Naive thymus-derived CD4-positive, alpha-beta T cell (primary cell): ENCODE measurements at regions of chr3 and their contacts with region 1.

Region 1: GRCh38 chr3:16884084-16884747 is 539 bp upstream of the PLCL2 start:
- DNase-seq: peak; percentile 44 to 77 (median 66)
- ATAC-seq: peak; percentile 69
- H3K4me3 ChIP-seq: peak overlapping the region; percentile 46
- H3K4me3 Mint-ChIP-seq: peak overlapping the region; percentile 90 to 99 (median 96)
- H3K27ac ChIP-seq: peak overlapping the region; percentile 78
- H3K27ac Mint-ChIP-seq: peak overlapping the region; percentile 92 to 99 (median 97)
- H3K4me1 ChIP-seq: peaks cover 12 to 14% of the 10 kb centered on the region in 2 donors
- H3K4me1 Mint-ChIP-seq: peaks cover 27 to 40% (median 35%) of the 10 kb centered on the region in 7 donors
- H3K27me3 ChIP-seq: no peaks in the 10 kb centered on the region
- H3K27me3 Mint-ChIP-seq: peaks cover 0 to 7% (median 0%) of the 10 kb centered on the region in 5 donors

Region 2: DNA sequence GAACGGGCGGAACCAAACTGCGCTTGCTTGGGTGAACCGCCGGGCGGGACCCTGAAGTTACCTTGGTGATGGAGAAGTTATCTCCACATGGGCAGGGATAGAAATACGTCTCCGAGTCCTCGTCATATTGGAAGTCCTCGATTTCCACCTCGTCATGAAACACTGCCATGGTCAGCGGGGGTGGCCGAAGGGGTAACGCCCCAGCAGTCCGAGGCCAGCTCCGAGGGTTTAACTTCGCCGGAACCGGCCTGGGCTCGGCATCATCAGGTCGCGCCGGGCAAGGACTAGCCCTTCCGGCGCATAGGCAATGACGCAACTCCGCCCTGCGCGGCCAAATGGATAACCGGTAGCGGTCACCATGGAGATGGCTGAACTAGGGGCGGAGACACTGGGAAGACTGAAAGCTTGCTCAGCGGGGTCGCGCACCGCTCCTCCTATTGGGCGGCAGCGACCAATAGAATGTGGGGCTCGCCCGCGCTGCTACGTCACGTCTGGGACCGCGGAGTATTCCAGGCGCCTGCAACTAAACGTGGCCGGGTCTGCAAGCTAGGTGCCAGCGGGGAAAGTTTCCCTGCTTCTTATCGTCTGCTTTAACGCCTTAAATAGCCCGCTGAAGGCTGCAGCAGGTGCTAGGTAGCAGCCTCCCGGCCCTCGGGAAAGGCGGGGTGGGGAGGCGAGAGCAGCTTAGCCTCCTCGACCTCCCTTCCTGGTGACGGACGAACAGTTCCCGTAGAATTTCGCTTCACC is 619.3 kb before region 1 on chr3 and contains the starts of genes DPH3 and OXNAD1:
- CTCF ChIA-PET with region 1: no interaction called
- POLR2A ChIA-PET with region 1: no interaction called
- intact Hi-C with region 1: loop called (anchors 1 to 5 kb)
- DNase-seq: peak; percentile 97 to 99 (median 98)
- ATAC-seq: peak; percentile 96
- H3K4me3 ChIP-seq: peak within 1 kb of the TSS; percentile 85
- H3K4me3 Mint-ChIP-seq: peak within 1 kb of the TSS; percentile 85 to 100 (median 98)
- H3K27ac ChIP-seq: peak within 1 kb of the TSS; percentile 88
- H3K27ac Mint-ChIP-seq: peak within 1 kb of the TSS; percentile 96 to 100 (median 98)
- H3K4me1 ChIP-seq: peaks cover 13 to 28% of the 10 kb centered on the region in 2 donors
- H3K4me1 Mint-ChIP-seq: peaks cover 13 to 50% (median 43%) of the 10 kb centered on the region in 7 donors
- H3K27me3 ChIP-seq: no peaks in the 10 kb centered on the region
- H3K27me3 Mint-ChIP-seq: peaks cover 0 to 2% (median 0%) of the 10 kb centered on the region in 5 donors
- total RNA-seq, gene DPH3: 12.4 to 23.6 (median 15.7) TPM
- total RNA-seq, gene OXNAD1: 80.3 to 171 (median 152) TPM

Region 3: DNA sequence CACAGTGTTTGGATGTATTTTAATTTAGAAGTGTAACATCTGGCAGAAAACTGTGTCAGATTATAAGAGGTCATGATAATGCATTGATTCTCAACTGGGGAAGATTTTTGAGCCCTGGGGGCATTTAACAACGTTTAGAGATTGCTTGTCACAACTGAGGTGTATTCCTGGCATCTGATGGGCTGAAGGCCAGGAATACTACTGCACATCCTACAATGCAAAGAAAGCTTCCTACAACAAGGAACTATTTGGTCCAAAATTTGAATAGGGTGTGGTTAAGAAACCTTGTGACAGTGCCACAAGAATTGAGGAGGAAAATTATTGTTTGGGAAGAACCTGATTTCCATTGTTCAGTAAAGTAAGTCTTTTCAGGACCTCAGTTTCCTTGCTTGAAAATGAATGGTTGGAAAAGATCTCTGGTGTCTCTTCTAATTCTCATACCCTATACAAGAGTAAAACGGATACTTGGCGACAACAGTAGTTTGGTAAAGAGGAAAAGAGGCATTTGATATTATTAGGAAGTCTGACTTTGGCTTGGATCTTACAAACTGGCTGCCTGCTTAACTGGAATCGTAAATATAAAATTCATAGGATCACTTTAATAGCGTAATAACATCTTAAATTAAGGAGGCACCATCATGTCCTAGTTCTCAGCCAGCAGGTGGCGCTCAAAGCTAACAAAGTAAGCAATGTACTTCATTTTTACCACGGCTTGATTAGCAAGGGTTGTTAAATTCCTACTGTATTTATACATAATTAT is 283.3 kb before region 1 on chr3:
- CTCF ChIA-PET with region 1: interaction called, 3 read pairs
- POLR2A ChIA-PET with region 1: no interaction called
- intact Hi-C with region 1: loop called in 1 of 2 experiments (anchors 5 kb)
- DNase-seq: peak; percentile 54 to 79 (median 68)
- ATAC-seq: peak; percentile 68
- H3K4me3 ChIP-seq: no peak overlapping the region
- H3K4me3 Mint-ChIP-seq: no peak overlapping the region
- H3K27ac ChIP-seq: no peak overlapping the region
- H3K27ac Mint-ChIP-seq: no peak overlapping the region
- H3K4me1 ChIP-seq: peaks cover 0 to 3% of the 10 kb centered on the region in 2 donors
- H3K4me1 Mint-ChIP-seq: peaks cover 5 to 23% (median 16%) of the 10 kb centered on the region in 7 donors
- H3K27me3 ChIP-seq: no peaks in the 10 kb centered on the region
- H3K27me3 Mint-ChIP-seq: peaks cover 0 to 54% (median 4%) of the 10 kb centered on the region in 5 donors

Region 4: GRCh38 chr3:16849229-16849628 is 35.0 kb before region 1 on chr3:
- CTCF ChIA-PET with region 1: interaction called, 4 read pairs
- POLR2A ChIA-PET with region 1: interaction called, 87 read pairs
- intact Hi-C with region 1: loop called in 1 of 2 experiments (anchors 1 kb)
- DNase-seq: peak; percentile 20 to 74 (median 59)
- ATAC-seq: peak; percentile 89
- H3K4me3 ChIP-seq: peak overlapping the region; percentile 14
- H3K4me3 Mint-ChIP-seq: peak overlapping the region; percentile 43 to 85 (median 79)
- H3K27ac ChIP-seq: peak overlapping the region; percentile 54
- H3K27ac Mint-ChIP-seq: peak overlapping the region; percentile 69 to 92 (median 83)
- H3K4me1 ChIP-seq: peaks cover 24 to 43% of the 10 kb centered on the region in 2 donors
- H3K4me1 Mint-ChIP-seq: peaks cover 29 to 61% (median 56%) of the 10 kb centered on the region in 7 donors
- H3K27me3 ChIP-seq: no peaks in the 10 kb centered on the region
- H3K27me3 Mint-ChIP-seq: peaks cover 0 to 8% (median 0%) of the 10 kb centered on the region in 5 donors

Region 5: DNA sequence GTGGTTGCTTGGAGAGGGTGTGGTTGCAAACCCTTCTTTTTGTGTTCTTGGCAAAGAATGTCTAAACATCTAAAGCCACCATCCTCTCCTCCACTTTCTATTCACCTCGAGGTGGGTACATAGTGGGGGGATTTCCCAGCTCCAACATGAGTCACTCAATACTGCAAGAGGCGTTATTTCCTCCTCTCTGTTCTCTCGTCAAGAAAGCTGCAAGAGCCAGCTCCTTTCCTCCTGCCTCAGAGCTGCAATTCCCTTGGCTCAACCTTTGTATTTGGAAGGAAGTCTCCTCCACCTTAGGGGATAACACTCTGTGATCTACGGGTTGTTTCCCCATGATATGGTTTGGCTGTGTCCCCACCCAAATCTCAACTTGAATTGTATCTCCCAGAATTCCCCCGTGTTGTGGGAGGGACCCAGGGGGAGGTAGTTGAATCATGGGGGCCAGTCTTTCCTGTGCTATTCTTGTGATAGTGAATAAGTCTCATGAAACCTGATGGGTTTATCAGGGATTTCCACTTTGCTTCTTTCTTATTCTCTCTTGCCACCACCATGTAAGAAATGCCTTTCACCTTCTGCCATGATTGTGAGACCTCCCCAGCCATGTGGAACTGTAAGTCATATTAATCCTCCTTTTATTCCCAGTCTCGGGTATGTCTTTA is 138.9 kb after region 1 on chr3:
- CTCF ChIA-PET with region 1: no interaction called
- POLR2A ChIA-PET with region 1: no interaction called
- intact Hi-C with region 1: loop called (anchors 1 to 2 kb)
- DNase-seq: peak in 4 of 9 donors; percentile 5 to 61 (median 34)
- ATAC-seq: peak; percentile 87
- H3K4me3 ChIP-seq: no peak overlapping the region
- H3K4me3 Mint-ChIP-seq: peak overlapping the region in 7 of 10 donors; percentile 27 to 72 (median 49)
- H3K27ac ChIP-seq: no peak overlapping the region
- H3K27ac Mint-ChIP-seq: peak overlapping the region; percentile 34 to 95 (median 79)
- H3K4me1 ChIP-seq: peaks cover 15 to 31% of the 10 kb centered on the region in 2 donors
- H3K4me1 Mint-ChIP-seq: peaks cover 34 to 87% (median 76%) of the 10 kb centered on the region in 7 donors
- H3K27me3 ChIP-seq: no peaks in the 10 kb centered on the region
- H3K27me3 Mint-ChIP-seq: no peaks in the 10 kb centered on the region

Region 6: DNA sequence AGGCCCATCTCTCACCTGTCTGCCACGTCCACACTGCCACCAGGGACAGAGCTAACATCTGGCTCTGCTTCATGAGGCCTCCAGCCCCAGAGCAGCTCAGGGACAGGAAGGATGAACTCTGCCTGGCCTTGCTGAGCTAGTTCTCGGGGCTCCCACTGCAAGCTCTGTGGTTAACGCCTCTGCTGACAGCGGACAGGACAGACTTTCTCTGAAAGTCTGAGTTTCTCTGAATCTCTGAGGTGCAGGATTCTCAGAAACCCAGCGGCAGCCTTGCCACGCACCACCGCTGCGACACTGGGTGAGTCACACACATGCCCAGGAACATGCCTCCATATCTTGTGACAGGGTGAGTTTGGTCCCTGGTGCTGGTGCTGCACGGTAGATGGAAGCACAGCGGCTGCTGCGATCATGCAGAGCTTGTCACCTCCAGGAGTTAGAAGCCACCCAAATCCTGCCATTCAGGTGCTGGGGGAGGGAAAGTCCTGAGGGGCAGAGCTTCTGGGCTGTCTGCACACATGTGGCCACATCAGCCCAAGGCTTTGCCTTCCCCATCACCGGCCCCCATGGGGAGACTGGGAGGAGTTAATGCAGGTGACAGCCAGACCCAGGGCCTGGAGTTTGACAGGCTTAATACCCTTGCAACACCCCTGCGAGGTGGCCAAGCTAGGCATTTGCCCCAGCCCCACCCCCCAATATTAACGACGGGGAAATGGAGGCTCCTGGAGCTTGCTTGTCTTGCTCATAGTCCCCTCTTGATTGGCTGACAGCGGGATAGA is 267.6 kb after region 1 on chr3:
- CTCF ChIA-PET with region 1: no interaction called
- POLR2A ChIA-PET with region 1: no interaction called
- intact Hi-C with region 1: loop called (anchors 1 to 5 kb)
- DNase-seq: peak; percentile 27 to 81 (median 46)
- ATAC-seq: peak; percentile 87
- H3K4me3 ChIP-seq: peak overlapping the region; percentile 38
- H3K4me3 Mint-ChIP-seq: peak overlapping the region; percentile 38 to 86 (median 65)
- H3K27ac ChIP-seq: peak overlapping the region; percentile 45
- H3K27ac Mint-ChIP-seq: peak overlapping the region; percentile 41 to 95 (median 88)
- H3K4me1 ChIP-seq: peaks cover 18 to 33% of the 10 kb centered on the region in 2 donors
- H3K4me1 Mint-ChIP-seq: peaks cover 15 to 65% (median 28%) of the 10 kb centered on the region in 7 donors
- H3K27me3 ChIP-seq: no peaks in the 10 kb centered on the region
- H3K27me3 Mint-ChIP-seq: peaks cover 0 to 4% (median 0%) of the 10 kb centered on the region in 5 donors

Region 7: DNA sequence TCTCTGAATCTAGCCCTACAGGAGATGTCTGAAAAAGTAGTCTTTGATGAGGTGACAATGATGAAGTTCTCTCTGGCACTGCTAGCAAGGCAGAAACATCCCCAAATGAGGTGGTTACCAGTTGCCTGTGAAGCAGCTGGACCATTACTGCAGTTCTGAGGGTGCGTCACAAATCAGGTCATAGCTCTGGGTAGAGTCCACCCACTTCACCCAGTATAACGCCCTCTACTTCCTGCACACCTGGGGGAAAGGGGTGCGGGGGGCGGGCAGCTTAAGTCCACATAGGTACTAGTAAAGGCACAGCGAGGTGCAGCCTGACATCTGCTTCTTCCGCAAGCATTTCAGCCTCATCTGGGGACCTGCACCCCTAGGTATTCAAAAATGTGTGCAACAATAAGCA is 1554.4 kb after region 1 on chr3:
- CTCF ChIA-PET with region 1: no interaction called
- POLR2A ChIA-PET with region 1: no interaction called
- intact Hi-C with region 1: loop called in 1 of 2 experiments (anchors 10 kb)
- DNase-seq: peak in 8 of 9 donors; percentile 64 to 91 (median 79)
- ATAC-seq: peak; percentile 95
- H3K4me3 ChIP-seq: peak overlapping the region; percentile 65
- H3K4me3 Mint-ChIP-seq: peak overlapping the region; percentile 80 to 100 (median 88)
- H3K27ac ChIP-seq: peak overlapping the region; percentile 97
- H3K27ac Mint-ChIP-seq: peak overlapping the region; percentile 87 to 95 (median 93)
- H3K4me1 ChIP-seq: peaks cover 11 to 19% of the 10 kb centered on the region in 2 donors
- H3K4me1 Mint-ChIP-seq: peaks cover 25 to 53% (median 43%) of the 10 kb centered on the region in 7 donors
- H3K27me3 ChIP-seq: no peaks in the 10 kb centered on the region
- H3K27me3 Mint-ChIP-seq: no peaks in the 10 kb centered on the region